Heart left ventricle (tissue), 16 donors: ENCODE measurements at regions of chr14 and their contacts with region 1.

Region 1: DNA sequence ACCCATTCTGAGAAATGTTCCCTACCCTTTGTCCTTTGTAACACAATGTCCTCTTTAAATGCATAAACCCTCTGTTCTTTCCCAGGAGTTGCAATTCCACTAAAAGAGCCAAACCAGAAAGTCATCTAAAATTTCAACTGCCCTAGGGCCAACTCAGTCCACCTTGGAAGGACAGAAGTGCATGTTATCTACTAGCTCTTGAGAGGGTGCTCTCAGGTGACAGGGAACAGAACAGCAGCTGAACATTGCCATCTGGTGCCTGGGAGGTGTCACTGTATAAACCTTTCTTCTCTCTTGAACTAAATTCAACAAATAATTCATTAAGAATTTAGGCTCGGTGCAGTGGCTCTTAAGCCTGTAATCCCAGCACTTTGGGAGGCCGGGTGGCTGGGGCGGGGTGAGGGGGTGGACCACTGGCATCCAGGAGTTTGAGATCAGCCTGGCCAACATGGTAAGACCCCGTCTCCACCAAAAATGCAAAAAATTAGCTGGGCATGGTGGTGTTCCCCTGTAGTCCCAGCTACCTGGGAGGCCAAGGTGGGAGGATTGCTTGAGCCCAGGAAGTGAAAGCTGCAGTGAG is 10.3 kb upstream of the FERMT2 start:
- DNase-seq: peak in 4 of 5 donors; percentile 47 to 70 (median 54)
- ATAC-seq: peak; percentile 87 to 93 (median 92)
- H3K4me3 ChIP-seq: no peak overlapping the region
- H3K27ac ChIP-seq: peak overlapping the region; percentile 3 to 81 (median 60)
- H3K4me1 ChIP-seq: peaks cover 0 to 15% (median 8%) of the 10 kb centered on the region in 12 donors
- H3K27me3 ChIP-seq: no peaks in the 10 kb centered on the region
- CTCF ChIP-seq: peak; percentile 37 to 80 (median 66)
- POLR2A ChIP-seq: no peak

Region 2: GRCh38 chr14:52824507-52824906 is 136.6 kb before region 1 on chr14:
- intact Hi-C with region 1: loop called (anchors 1 to 5 kb)
- DNase-seq: no peak
- ATAC-seq: no peak
- H3K4me3 ChIP-seq: no peak overlapping the region
- H3K27ac ChIP-seq: no peak overlapping the region
- H3K4me1 ChIP-seq: peaks cover 0 to 18% (median 0%) of the 10 kb centered on the region in 12 donors
- H3K27me3 ChIP-seq: no peaks in the 10 kb centered on the region
- CTCF ChIP-seq: no peak
- POLR2A ChIP-seq: no peak

Region 3: DNA sequence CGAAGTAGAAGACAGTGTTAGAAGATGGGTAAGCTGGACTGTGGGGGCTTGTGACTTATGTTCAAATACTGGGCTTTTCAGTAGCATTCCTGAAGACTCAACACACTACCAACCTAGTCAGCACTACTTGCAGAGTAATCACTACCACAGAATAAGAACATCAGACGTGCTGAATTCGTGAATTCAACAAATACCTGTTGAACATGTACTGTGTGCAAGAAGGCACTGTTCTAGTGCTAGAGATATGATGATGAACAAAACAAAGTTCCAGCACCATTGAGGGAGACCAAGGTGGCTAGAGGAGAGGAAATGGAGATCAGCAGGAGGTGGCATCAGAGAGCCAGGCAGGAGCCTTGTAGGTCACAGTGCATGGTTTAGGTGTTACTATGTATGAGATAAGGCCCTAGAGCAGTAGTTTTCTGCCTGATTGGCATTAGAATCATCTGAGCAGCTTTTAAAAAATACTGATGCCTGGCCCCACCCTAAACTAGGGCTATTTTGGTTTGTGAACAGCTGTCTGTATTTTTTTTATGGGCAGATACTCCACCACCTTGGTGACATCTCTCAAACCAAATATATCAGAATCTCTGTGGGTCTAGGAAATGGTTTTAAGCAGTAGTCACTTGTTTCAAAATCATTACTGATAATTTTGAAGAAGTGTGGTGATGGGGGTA is 37.1 kb before region 1 on chr14:
- intact Hi-C with region 1: no loop called
- DNase-seq: no peak
- ATAC-seq: peak; percentile 40 to 71 (median 62)
- H3K4me3 ChIP-seq: no peak overlapping the region
- H3K27ac ChIP-seq: peak overlapping the region in 2 of 12 donors; percentile 0 to 56
- H3K4me1 ChIP-seq: peaks cover 10 to 97% (median 81%) of the 10 kb centered on the region in 12 donors
- H3K27me3 ChIP-seq: no peaks in the 10 kb centered on the region
- CTCF ChIP-seq: peak in 6 of 12 donors; percentile 12 to 49 (median 23)
- POLR2A ChIP-seq: no peak

Region 4: DNA sequence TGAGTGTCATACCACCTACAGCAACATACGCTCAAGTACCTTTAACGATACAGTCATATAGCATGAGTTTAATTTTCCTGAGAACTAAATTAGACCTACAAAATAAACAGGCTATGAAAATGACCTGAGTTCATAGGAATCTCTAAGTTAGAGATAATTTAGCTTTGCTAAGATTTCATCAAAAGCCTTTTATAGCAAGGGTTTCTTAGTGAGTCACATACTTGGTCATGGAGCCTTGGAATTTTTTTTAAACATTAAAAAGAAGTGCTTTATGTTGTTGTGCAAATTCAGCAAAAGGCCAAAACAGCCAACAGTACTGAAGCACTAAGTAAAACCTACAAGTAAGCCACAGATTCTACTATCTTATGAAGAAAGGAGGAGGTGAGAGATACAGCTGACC is 83.3 kb after region 1 on chr14:
- intact Hi-C with region 1: loop called in 2 of 10 experiments (anchors 5 kb)
- DNase-seq: no peak
- ATAC-seq: no peak
- H3K4me3 ChIP-seq: no peak overlapping the region
- H3K27ac ChIP-seq: peak overlapping the region in 1 of 12 donors; percentile 14
- H3K4me1 ChIP-seq: peaks cover 4 to 39% (median 28%) of the 10 kb centered on the region in 12 donors
- H3K27me3 ChIP-seq: no peaks in the 10 kb centered on the region
- CTCF ChIP-seq: no peak
- POLR2A ChIP-seq: no peak

Region 5: DNA sequence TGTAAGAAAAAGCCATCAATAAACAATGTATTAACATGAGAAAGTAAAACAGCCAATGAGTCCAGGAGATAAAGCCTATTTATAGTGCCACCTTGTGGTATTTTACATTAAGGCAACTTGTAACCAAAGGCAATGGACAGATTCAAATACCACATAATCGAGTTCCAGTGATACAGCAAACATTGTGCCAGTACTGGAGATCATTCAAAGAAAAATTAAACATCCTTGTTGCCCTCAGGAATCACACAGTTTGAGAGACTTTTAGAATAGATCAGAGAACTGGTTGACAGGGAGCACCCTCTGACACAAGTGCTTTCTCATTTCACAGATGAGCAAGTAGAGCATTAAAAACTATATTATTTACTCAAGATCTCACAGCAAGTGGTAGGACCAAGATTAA is 93.9 kb after region 1 on chr14:
- intact Hi-C with region 1: loop called in 8 of 10 experiments (anchors 2 to 10 kb)
- DNase-seq: no peak
- ATAC-seq: peak; percentile 51 to 81 (median 65)
- H3K4me3 ChIP-seq: no peak overlapping the region
- H3K27ac ChIP-seq: peak overlapping the region in 2 of 12 donors; percentile 8 to 9
- H3K4me1 ChIP-seq: peaks cover 0 to 7% (median 0%) of the 10 kb centered on the region in 12 donors
- H3K27me3 ChIP-seq: no peaks in the 10 kb centered on the region
- CTCF ChIP-seq: peak; percentile 63 to 88 (median 80)
- POLR2A ChIP-seq: no peak

Region 6: GRCh38 chr14:53152890-53153701 is 191.9 kb after region 1 on chr14 and contains the start of gene DDHD1:
- intact Hi-C with region 1: loop called in 1 of 10 experiments (anchors 5 kb)
- DNase-seq: peak; percentile 75 to 92 (median 85)
- ATAC-seq: peak; percentile 66 to 96 (median 92)
- H3K4me3 ChIP-seq: peak within 1 kb of the TSS; percentile 58 to 96 (median 88)
- H3K27ac ChIP-seq: peak within 1 kb of the TSS; percentile 80 to 95 (median 89)
- H3K4me1 ChIP-seq: peaks cover 0 to 41% (median 15%) of the 10 kb centered on the region in 12 donors
- H3K27me3 ChIP-seq: no peaks in the 10 kb centered on the region
- CTCF ChIP-seq: no peak
- POLR2A ChIP-seq: peak in 1 of 2 donors; percentile 64
- total RNA-seq, gene DDHD1: 5.9 to 12.1 (median 7.8) TPM

Region 7: DNA sequence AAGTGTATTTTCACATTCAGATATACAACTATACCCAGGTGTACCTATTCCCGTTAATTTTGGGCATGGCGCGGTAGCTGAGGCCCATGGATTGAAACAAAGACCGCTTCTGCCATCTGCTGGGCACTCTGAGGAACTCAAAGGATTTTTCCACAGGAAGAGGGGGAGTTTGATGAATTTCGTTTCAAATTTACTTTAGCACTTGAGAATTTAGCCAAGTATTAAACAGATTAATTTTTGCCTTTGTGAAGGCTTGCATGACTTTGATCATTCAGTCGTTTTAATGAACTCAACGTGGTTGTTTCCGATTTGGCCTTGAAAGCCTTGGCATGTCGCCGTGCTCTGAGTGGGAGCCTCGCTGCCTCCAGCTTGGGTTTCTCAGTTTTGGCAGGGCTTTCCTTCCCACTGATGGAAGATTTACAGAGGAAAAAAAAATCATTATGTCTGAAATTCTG is 345.1 kb after region 1 on chr14:
- intact Hi-C with region 1: loop called in 1 of 10 experiments (anchors 10 kb)
- DNase-seq: peak; percentile 52 to 73 (median 64)
- ATAC-seq: peak; percentile 51 to 85 (median 76)
- H3K4me3 ChIP-seq: peak overlapping the region in 10 of 12 donors; percentile 26 to 57 (median 42)
- H3K27ac ChIP-seq: peak overlapping the region in 10 of 12 donors; percentile 8 to 68 (median 44)
- H3K4me1 ChIP-seq: peaks cover 0 to 21% (median 4%) of the 10 kb centered on the region in 12 donors
- H3K27me3 ChIP-seq: no peaks in the 10 kb centered on the region
- CTCF ChIP-seq: peak; percentile 70 to 89 (median 78)
- POLR2A ChIP-seq: no peak